MCF 10A (cell line): ENCODE measurements at regions of chr1 and their contacts with region 1.

Region 1: GRCh38 chr1:99969729-99970621 is at the start of gene SLC35A3:
- DNase-seq: peak; percentile 75
- H3K4me3 Mint-ChIP-seq: peak within 1 kb of the TSS; percentile 99
- H3K27ac Mint-ChIP-seq: peak within 1 kb of the TSS; percentile 92
- H3K4me1 Mint-ChIP-seq: peaks cover 6% of the 10 kb centered on the region
- H3K27me3 Mint-ChIP-seq: no peaks in the 10 kb centered on the region
- CTCF ChIP-seq: no peak
- total RNA-seq, gene SLC35A3: 15.1 and 20.7 TPM in 2 replicates

Region 2: DNA sequence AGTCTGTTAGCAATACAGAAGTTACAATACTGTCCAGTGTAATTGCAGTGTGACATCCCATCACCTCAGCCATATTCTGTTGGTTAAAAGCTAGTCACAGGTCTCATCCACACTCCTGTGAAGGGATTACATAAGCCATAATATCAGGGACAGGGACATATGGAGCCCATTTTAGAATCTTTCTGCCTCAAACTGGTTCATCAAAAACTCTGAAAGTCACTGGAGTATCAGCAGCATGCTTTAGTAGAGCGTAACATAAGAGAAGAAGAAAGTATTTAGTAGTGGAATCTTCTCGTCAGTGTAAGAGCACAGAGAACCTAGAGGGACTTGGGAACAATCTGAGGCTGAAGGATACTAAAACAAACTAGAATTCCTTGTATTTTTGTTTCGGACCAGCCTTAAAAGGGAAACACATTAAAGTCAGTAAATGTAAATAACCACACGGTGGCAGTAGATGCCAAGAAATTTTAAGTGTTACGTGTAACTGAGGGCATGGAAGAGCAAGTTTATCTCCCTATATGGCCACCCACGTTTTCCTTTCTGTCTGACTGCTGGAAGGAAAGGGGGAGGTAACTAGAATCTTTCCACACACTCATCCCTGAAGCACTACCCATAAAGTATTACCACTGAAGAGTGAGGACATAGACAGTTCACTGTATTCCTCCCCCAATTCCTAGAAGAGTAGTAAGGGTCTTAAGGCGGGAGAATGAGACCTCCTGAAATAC is 161.4 kb before region 1 on chr1:
- CTCF ChIA-PET with region 1: interaction called, 3 read pairs
- POLR2A ChIA-PET with region 1: no interaction called
- intact Hi-C with region 1: loop called (anchors 5 kb)
- DNase-seq: peak; percentile 90
- H3K4me3 Mint-ChIP-seq: no peak overlapping the region
- H3K27ac Mint-ChIP-seq: no peak overlapping the region
- H3K4me1 Mint-ChIP-seq: no peaks in the 10 kb centered on the region
- H3K27me3 Mint-ChIP-seq: no peaks in the 10 kb centered on the region
- CTCF ChIP-seq: peak; percentile 49

Region 3: DNA sequence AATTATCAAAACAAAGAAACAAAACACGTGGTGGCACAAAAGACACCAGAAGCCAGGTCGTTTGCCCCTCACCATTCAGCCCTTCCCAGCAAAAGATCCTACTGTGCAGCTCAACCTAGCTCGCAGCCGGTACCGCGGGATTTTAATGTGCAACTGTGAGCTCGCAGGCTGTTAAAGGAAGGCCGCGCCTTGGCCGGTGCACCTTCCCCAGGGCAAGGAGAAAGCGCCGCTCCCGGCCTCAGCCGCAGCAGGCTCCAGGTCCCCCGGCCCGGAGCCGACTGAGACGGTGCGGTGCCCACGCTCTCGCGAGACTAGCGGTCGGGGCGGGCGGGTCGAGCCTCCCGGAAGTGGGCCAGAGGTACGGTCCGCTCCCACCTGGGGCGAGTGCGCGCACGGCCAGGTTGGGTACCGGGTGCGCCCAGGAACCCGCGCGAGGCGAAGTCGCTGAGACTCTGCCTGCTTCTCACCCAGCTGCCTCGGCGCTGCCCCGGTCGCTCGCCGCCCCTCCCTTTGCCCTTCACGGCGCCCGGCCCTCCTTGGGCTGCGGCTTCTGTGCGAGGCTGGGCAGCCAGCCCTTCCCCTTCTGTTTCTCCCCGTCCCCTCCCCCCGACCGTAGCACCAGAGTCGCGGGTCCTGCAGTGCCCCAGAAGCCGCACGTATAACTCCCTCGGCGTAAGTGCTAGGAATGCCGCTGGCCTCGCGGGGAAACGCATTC is 120.1 kb before region 1 on chr1 and contains the start of gene AGL:
- CTCF ChIA-PET with region 1: no interaction called
- POLR2A ChIA-PET with region 1: interaction called, 11 read pairs
- intact Hi-C with region 1: loop called (anchors 1 kb)
- DNase-seq: peak; percentile 84
- H3K4me3 Mint-ChIP-seq: peak within 1 kb of the TSS; percentile 93
- H3K27ac Mint-ChIP-seq: peak within 1 kb of the TSS; percentile 85
- H3K4me1 Mint-ChIP-seq: peaks cover 14% of the 10 kb centered on the region
- H3K27me3 Mint-ChIP-seq: no peaks in the 10 kb centered on the region
- CTCF ChIP-seq: no peak
- total RNA-seq, gene AGL: 8.9 and 9.1 TPM in 2 replicates

Region 4: DNA sequence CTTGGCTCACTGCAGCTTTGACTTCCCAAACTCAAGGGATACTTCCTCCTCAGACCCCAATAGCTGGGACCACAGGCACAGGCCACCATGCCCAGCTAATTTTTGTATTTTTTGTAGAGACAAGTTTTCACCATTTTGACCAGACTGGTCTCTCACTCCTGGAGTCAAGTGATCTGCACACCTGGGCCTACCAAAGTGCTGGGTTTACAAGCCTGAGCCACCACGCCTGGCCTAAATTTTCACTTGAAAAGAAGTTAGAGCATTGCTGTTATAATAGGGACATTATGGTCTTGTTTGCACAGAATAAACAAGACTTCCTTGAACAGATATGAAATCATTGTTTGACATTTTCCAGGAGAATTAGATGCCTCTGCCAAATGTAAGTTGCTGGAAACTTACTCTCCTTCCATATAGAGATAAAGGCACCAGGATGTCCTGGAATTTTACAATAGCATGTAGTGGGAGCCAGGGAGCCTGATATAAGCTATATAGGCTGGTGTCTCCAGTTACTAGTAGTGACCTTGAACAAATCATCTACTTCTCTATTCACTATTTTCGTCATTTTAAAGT is 16.8 kb after region 1 on chr1:
- CTCF ChIA-PET with region 1: interaction called, 4 read pairs
- POLR2A ChIA-PET with region 1: interaction called, 13 read pairs
- intact Hi-C with region 1: no loop called
- DNase-seq: no peak
- H3K4me3 Mint-ChIP-seq: no peak overlapping the region
- H3K27ac Mint-ChIP-seq: no peak overlapping the region
- H3K4me1 Mint-ChIP-seq: no peaks in the 10 kb centered on the region
- H3K27me3 Mint-ChIP-seq: no peaks in the 10 kb centered on the region
- CTCF ChIP-seq: no peak

Region 5: GRCh38 chr1:100051401-100051800 is 81.4 kb after region 1 on chr1:
- CTCF ChIA-PET with region 1: no interaction called
- POLR2A ChIA-PET with region 1: interaction called, 15 read pairs
- intact Hi-C with region 1: no loop called
- DNase-seq: no peak
- H3K4me3 Mint-ChIP-seq: no peak overlapping the region
- H3K27ac Mint-ChIP-seq: peak overlapping the region; percentile 37
- H3K4me1 Mint-ChIP-seq: peaks cover 28% of the 10 kb centered on the region
- H3K27me3 Mint-ChIP-seq: no peaks in the 10 kb centered on the region
- CTCF ChIP-seq: no peak

Region 6: DNA sequence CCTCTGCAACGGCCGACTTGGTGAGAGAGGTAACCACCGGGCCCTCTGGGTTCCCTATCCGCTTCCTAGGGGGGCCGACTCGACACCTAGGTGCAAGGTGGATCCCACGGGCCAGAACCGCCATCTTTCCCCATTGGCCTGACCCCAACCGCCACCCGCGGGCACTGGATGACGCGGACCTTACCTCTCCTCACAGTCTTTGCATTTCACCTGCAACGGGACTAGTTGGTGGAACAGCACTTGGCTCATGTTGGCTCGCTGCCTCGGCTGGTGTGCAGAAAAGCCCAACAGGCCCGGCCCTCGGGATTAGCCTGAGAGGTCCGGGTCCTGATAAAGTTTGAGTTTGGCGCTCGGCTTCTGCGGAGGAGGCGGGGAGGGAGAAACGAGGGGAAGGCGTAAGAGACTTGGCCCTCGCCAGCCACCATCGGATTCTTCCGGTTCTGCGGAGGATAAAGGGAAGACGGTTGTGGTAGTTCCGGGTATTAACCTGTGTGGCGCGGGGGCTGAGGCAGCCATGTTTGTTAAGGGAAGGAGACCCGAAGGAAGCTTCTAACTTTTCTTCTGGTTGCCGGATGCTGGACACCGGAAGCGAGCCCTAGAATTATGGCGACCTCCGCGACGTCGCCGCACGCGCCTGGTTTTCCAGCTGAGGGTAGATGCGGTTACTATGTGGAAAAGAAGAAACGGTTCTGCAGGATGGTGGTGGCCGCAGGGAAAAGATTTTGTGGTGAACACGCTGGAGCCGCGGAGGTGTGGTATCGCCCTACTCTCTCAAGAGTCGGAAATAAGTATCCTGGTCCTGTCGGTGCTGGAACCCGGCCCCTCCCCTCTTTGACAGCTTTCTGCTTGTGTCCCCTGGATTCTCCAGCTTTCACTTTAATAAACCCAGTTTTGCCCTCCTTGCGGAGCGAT is 162.8 kb after region 1 on chr1 and contains the starts of genes SASS6 and TRMT13:
- CTCF ChIA-PET with region 1: no interaction called
- POLR2A ChIA-PET with region 1: interaction called, 18 read pairs
- intact Hi-C with region 1: loop called (anchors 2 kb)
- DNase-seq: peak; percentile 98
- H3K4me3 Mint-ChIP-seq: peak within 1 kb of the TSS; percentile 86
- H3K27ac Mint-ChIP-seq: peak within 1 kb of the TSS; percentile 75
- H3K4me1 Mint-ChIP-seq: peaks cover 19% of the 10 kb centered on the region
- H3K27me3 Mint-ChIP-seq: no peaks in the 10 kb centered on the region
- CTCF ChIP-seq: no peak
- total RNA-seq, gene SASS6: 6.6 and 7.5 TPM in 2 replicates
- total RNA-seq, gene TRMT13: 24.2 and 25.5 TPM in 2 replicates